Panc1 (cell line): ENCODE measurements at regions of chr20 and their contacts with region 1.

Region 1: GRCh38 chr20:3193806-3194616 is 10.5 kb downstream of the DDRGK1 start:
- DNase-seq: no peak
- ATAC-seq: no peak
- H3K4me3 ChIP-seq: no peak overlapping the region
- H3K27ac ChIP-seq: no peak overlapping the region
- H3K4me1 ChIP-seq: no peaks in the 10 kb centered on the region
- H3K27me3 ChIP-seq: no peaks in the 10 kb centered on the region
- CTCF ChIP-seq: no peak

Region 2: GRCh38 chr20:3130051-3130600 is 63.9 kb before region 1 on chr20:
- CTCF ChIA-PET with region 1: no interaction called
- POLR2A ChIA-PET with region 1: interaction called, 10 read pairs
- in situ Hi-C with region 1: no loop called
- intact Hi-C with region 1: no loop called
- DNase-seq: no peak
- ATAC-seq: no peak
- H3K4me3 ChIP-seq: no peak overlapping the region
- H3K27ac ChIP-seq: no peak overlapping the region
- H3K4me1 ChIP-seq: no peaks in the 10 kb centered on the region
- H3K27me3 ChIP-seq: no peaks in the 10 kb centered on the region
- CTCF ChIP-seq: no peak